ENCODE measurements at regions of chr5 and their contacts with region 1.

Region 1: GRCh38 chr5:57137401-57137800 is 36.5 kb upstream of the GPBP1 start:
- DNase-seq: no peak
- ATAC-seq: no peak
- H3K4me3 ChIP-seq: peak overlapping the region; percentile 36 to 60; a peak in 2 of 4 replicates
- H3K27ac ChIP-seq: no peak overlapping the region
- H3K4me1 ChIP-seq: no peaks in the 10 kb centered on the region
- H3K27me3 ChIP-seq: no peaks in the 10 kb centered on the region
- CTCF ChIP-seq: no peak

Region 2: DNA sequence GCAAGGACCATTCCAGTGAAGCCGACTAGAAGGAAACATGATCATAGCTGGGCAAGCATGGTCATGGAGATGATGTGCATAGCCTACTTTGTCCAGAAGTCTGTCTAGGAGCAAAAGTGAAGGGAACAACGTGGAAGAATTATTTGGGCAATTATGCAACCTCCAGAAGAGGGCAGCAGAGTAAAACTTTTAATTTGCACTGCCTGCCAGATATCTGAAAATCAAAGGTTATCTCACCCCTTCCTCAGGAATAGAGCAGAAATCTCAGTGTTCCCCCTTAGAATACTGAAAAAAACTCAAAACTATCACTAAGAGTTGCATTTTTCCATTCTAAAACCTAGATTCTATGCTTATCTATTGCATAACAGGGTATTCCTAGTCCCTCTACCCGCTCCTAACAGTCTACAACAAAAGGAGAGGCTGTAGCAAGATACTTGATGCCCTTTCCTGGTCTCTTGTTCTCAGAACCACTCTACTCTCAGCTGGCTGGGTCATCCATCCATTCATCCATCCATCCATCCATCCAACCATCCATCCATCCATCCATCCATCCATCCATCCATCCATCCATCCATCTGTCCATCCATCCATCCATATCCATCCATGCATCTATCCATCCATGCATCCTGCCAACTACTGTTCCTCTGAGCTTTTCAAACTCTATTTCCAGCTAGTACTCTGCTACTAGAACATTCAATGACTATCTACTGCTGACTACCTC is 236.4 kb before region 1 on chr5:
- CTCF ChIA-PET with region 1: interaction called, 16 read pairs
- POLR2A ChIA-PET with region 1: no interaction called
- in situ Hi-C with region 1: no loop called
- intact Hi-C with region 1: loop called (anchors 2 kb)
- DNase-seq: no peak
- ATAC-seq: peak; percentile 86
- H3K4me3 ChIP-seq: no peak overlapping the region
- H3K27ac ChIP-seq: no peak overlapping the region
- H3K4me1 ChIP-seq: no peaks in the 10 kb centered on the region
- H3K27me3 ChIP-seq: no peaks in the 10 kb centered on the region
- CTCF ChIP-seq: peak; percentile 80

Region 3: DNA sequence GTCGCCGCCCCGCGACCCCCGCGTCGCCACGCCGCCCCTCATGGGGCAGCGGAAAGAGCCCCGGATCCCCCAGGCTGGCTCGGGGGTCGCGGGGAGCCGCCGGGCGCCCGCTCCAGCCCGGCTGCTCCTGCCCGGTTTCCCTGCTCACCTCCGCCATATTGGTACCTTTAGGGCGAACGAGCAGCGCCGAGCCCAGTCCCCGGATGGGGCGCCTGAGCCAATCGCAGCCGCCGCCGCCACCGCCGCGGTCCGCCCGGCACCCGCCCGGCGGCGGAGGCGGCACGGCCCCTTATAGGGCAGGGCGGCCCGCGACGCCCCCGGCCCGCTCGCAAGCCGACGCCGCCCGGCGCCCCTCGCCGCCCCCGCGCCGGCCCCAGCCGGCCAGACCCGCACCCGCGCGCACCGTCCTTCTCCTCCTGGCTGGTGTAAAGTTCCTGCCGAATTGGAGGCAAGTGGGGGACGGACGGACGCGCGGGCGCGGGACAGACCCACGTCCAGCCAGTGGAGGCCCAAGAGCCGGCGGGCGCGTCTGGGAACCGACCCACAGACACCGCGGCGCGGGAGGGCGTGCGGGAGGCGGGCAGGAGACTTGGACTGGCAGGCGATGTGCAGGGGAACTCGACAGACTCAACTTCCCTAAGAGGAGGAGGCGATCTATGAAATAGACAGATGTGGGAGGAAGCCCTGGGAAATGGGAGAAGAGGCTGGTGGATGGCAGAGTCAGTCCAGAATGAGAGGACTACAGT is 185.3 kb before region 1 on chr5 and contains the start of gene MIER3:
- CTCF ChIA-PET with region 1: interaction called, 19 read pairs
- POLR2A ChIA-PET with region 1: no interaction called
- in situ Hi-C with region 1: no loop called
- intact Hi-C with region 1: no loop called
- DNase-seq: no peak
- ATAC-seq: peak; percentile 99
- H3K4me3 ChIP-seq: peak within 1 kb of the TSS; percentile 82 to 84
- H3K27ac ChIP-seq: peak within 1 kb of the TSS; percentile 85
- H3K4me1 ChIP-seq: peaks cover 10% of the 10 kb centered on the region
- H3K27me3 ChIP-seq: peaks cover 12% of the 10 kb centered on the region; the same call in 1 of the 2 replicates
- CTCF ChIP-seq: no peak
- total RNA-seq, gene MIER3: 29.7 TPM

Region 4: GRCh38 chr5:57007344-57007743 is 130.1 kb before region 1 on chr5:
- CTCF ChIA-PET with region 1: interaction called, 12 read pairs
- POLR2A ChIA-PET with region 1: no interaction called
- in situ Hi-C with region 1: no loop called
- intact Hi-C with region 1: no loop called
- DNase-seq: no peak
- ATAC-seq: no peak
- H3K4me3 ChIP-seq: no peak overlapping the region
- H3K27ac ChIP-seq: no peak overlapping the region
- H3K4me1 ChIP-seq: peaks cover 6% of the 10 kb centered on the region; the same call in 1 of the 2 replicates
- H3K27me3 ChIP-seq: no peaks in the 10 kb centered on the region
- CTCF ChIP-seq: no peak

Region 5: GRCh38 chr5:57221049-57221568 is 83.7 kb after region 1 on chr5:
- CTCF ChIA-PET with region 1: interaction called, 11 read pairs
- POLR2A ChIA-PET with region 1: no interaction called
- in situ Hi-C with region 1: no loop called
- intact Hi-C with region 1: loop called (anchors 2 kb)
- DNase-seq: peak; percentile 62
- ATAC-seq: peak; percentile 78
- H3K4me3 ChIP-seq: no peak overlapping the region
- H3K27ac ChIP-seq: no peak overlapping the region
- H3K4me1 ChIP-seq: 0 out of 2 replicates have a peak, but pooled peaks cover under 1% of the 10 kb centered on the region
- H3K27me3 ChIP-seq: no peaks in the 10 kb centered on the region
- CTCF ChIP-seq: peak; percentile 82; the same call in 1 of the 2 replicates